HEK293 (cell line): ENCODE measurements at regions of chr16 and their contacts with region 1.

Region 1: DNA sequence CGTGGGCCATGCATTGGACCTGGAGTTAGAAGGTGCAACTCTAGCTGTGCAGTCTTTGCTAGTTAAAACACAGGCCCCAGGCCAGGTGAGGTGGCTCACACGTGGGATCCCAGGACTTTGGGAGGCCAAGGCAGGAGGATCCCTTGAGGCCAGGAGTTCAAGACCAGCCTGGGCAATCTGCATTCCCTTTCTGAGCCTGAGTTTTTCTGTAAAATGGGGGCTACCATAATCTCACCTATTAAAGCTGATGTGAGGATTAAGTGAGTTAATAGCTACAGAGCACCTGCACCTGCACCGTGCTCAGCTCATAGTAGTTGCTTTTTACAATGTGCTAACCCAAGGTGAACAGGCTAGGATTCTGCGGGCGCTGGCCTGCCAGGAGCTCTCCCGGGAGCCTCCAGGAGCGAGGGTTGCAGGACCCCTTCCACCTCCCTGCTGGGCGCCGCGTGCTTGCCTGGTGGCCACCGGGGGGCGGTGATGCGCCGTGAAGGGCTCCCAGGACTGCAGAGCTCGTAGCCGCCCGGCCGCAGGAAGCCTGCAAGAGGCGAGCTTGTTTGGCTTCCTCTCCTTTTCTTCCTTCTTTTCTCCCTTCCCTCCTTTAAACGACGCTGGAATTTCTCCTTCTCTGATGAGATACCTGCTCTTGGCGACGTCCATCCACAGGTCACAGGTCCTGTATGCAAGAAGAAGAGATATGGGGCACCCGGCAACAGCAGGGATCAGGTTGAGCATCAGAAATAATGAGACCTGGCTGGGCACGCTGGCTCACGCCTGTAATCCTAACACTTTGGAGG is 51.3 kb downstream of the ZFP90 start:
- H3K4me3 ChIP-seq: no peak overlapping the region
- H3K27ac ChIP-seq: no peak overlapping the region
- H3K4me1 ChIP-seq: no peaks in the 10 kb centered on the region
- CTCF ChIP-seq: peak; percentile 90

Region 2: GRCh38 chr16:68517606-68518166 is 72.7 kb before region 1 on chr16:
- CTCF ChIA-PET with region 1: no interaction called
- POLR2A ChIA-PET with region 1: no interaction called
- H3K4me3 ChIP-seq: no peak overlapping the region
- H3K27ac ChIP-seq: no peak overlapping the region
- H3K4me1 ChIP-seq: no peaks in the 10 kb centered on the region
- CTCF ChIP-seq: no peak

Region 3: DNA sequence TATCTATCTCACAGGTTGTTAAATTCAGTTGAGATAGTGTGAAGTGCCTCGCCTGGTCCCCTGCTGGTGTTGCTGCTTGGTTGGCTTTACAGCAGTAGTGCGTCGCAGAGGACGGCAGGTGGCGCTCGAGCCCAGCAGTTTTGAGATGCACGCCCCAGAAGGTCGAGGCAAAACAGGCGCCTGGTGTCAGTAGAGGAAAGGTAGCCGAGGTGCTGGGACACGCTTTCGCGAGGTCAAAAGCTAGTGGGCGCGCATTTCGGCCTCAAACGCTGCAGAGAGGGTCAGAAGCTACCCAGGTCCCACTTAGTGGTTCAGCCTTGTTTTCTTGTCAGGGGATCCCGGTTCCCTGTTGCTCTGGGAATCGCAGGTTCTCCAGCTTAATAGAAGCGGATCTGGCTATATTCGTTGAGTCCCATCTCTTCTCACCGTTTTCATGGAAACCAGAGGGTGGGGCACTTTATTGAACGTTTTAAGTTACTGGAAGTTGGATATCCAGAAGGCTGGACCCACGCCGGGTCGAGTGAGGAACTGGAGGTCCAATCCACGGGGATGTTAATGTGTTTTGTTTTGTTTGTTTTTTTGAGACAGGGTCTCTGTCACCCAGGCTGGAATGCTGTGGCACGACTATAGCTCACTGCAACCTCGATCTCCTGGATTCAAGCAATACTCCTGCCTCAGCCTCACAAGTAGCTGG is 61.6 kb before region 1 on chr16:
- CTCF ChIA-PET with region 1: interaction called, 18 read pairs
- POLR2A ChIA-PET with region 1: no interaction called
- H3K4me3 ChIP-seq: no peak overlapping the region
- H3K27ac ChIP-seq: no peak overlapping the region
- H3K4me1 ChIP-seq: no peaks in the 10 kb centered on the region
- CTCF ChIP-seq: peak; percentile 93

Region 4: GRCh38 chr16:68700831-68701230 is 110.4 kb after region 1 on chr16:
- CTCF ChIA-PET with region 1: interaction called, 10 read pairs
- POLR2A ChIA-PET with region 1: no interaction called
- H3K4me3 ChIP-seq: no peak overlapping the region
- H3K27ac ChIP-seq: no peak overlapping the region
- H3K4me1 ChIP-seq: no peaks in the 10 kb centered on the region
- CTCF ChIP-seq: no peak

Region 5: GRCh38 chr16:68843482-68844210 is 253.2 kb after region 1 on chr16 and contains the start of gene TANGO6:
- CTCF ChIA-PET with region 1: interaction called, 19 read pairs
- POLR2A ChIA-PET with region 1: interaction called, 4 read pairs
- H3K4me3 ChIP-seq: peak within 1 kb of the TSS; percentile 94
- H3K27ac ChIP-seq: peak within 1 kb of the TSS; percentile 67; the same call in 1 of the 2 replicates
- H3K4me1 ChIP-seq: no peaks in the 10 kb centered on the region
- CTCF ChIP-seq: peak; percentile 68; the same call in 1 of the 2 replicates

Region 6: DNA sequence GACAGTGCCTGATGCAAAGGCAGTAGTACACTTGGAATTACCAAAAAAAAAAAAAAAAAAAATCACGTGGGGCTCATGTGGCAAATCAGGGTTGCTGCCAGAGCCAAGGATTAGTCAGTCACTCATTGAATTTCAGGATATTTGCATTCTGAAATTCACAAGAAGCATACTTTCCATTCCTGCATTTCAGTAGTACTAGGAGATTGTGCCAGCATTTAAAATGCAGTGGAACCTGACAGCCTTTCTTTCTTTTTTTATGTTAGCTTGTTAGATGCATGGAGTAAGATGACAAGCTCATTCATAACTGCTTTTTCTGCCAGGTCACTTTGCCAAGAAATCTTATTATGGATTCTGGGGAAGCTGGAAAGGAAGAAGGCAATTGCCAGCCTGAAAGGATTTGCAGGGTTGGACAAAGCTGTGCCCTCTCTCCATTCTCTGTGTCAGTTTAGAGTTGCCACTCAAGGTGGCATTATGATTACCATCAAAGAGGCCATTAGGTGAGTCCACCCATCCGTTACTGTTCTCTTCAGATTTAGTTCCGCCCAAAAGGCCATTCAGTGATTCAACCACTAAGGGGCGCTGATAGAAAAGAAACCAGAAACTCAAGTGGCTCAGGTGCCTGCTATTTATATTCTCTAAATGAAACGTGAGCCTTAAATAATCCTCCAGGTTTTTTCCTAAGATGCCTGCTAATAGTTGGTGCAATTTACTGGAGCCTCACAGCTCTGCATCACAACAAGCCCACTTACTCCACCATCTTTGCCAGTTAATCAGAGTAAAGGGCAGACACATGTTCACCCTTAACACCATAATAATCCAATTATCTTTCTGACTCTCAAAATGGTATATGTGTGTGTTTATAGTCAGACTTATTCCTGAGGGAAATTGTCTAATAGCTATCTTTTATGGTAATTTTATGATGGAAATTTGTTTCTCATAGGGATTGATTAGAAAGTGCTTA is 311.9 kb after region 1 on chr16:
- CTCF ChIA-PET with region 1: interaction called, 13 read pairs
- POLR2A ChIA-PET with region 1: no interaction called
- H3K4me3 ChIP-seq: no peak overlapping the region
- H3K27ac ChIP-seq: no peak overlapping the region
- H3K4me1 ChIP-seq: no peaks in the 10 kb centered on the region
- CTCF ChIP-seq: 0 out of 2 replicates have a peak, but pooled peaks have one; percentile 20